ENCODE measurements at regions of chr2 and their contacts with region 1.

Region 1: GRCh38 chr2:224894356-224894755 is 147.9 kb downstream of the DOCK10 start:
- DNase-seq: no peak
- H3K4me3 ChIP-seq: no peak overlapping the region
- H3K27ac ChIP-seq: no peak overlapping the region
- H3K4me1 ChIP-seq: peaks cover 12% of the 10 kb centered on the region
- H3K27me3 ChIP-seq: no peaks in the 10 kb centered on the region
- CTCF ChIP-seq: no peak

Region 2: DNA sequence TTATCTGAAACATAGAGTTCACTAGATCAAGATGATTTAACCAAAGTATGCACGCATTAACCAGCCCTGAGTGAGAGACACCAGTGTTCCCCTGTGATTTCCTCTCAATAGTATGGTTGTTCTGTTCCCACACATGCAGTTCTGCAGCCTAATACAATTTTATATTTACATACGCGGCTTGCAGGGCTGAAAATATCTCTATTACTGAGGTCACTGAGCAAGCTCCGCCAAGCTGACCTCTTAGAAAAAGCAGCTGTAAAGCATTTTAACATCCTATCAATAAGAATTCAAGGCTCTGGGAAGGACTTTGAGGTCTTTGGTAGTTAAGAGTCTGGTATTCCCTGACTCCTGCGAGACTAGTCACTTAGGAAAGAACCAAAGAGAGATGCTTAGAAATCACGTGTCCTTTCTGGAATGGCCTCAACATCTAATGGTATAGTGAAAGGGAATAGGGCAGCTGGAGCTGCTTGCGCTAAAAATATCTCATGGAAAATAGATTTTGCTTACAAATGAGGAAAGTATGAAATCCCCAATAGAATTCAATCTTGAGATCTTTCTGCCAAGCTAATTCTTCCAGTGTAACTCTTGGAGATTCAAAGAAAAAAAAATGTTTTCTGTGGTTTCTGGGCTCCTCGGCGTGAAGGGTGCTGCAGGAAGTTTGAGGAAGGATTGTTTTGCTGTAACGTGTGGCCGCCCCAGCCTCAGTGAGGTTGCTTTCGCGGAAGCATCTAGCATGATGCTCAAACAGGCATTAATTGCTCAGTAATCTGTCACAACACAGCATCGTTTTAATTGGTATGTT is 88.8 kb after region 1 on chr2:
- CTCF ChIA-PET with region 1: no interaction called
- dilution Hi-C with region 1: loop called (anchors 5 kb)
- in situ Hi-C with region 1: no loop called
- intact Hi-C with region 1: no loop called
- DNase-seq: no peak
- H3K4me3 ChIP-seq: peak overlapping the region in 2 of 3 experiments; percentile 15 to 24
- H3K27ac ChIP-seq: no peak overlapping the region
- H3K4me1 ChIP-seq: peaks cover 13% of the 10 kb centered on the region
- H3K27me3 ChIP-seq: no peaks in the 10 kb centered on the region
- CTCF ChIP-seq: no peak

Region 3: GRCh38 chr2:225310745-225311144 is 416.4 kb after region 1 on chr2:
- CTCF ChIA-PET with region 1: no interaction called
- dilution Hi-C with region 1: no loop called
- in situ Hi-C with region 1: no loop called
- intact Hi-C with region 1: no loop called
- DNase-seq: no peak
- H3K4me3 ChIP-seq: no peak overlapping the region
- H3K27ac ChIP-seq: no peak overlapping the region
- H3K4me1 ChIP-seq: no peaks in the 10 kb centered on the region
- H3K27me3 ChIP-seq: no peaks in the 10 kb centered on the region
- CTCF ChIP-seq: no peak